Activated CD4-positive, alpha-beta T cell treated with anti-CD3 and anti-CD28 coated beads for 36 hours (primary cell): ENCODE measurements at regions of chr15 and their contacts with region 1.

Region 1: DNA sequence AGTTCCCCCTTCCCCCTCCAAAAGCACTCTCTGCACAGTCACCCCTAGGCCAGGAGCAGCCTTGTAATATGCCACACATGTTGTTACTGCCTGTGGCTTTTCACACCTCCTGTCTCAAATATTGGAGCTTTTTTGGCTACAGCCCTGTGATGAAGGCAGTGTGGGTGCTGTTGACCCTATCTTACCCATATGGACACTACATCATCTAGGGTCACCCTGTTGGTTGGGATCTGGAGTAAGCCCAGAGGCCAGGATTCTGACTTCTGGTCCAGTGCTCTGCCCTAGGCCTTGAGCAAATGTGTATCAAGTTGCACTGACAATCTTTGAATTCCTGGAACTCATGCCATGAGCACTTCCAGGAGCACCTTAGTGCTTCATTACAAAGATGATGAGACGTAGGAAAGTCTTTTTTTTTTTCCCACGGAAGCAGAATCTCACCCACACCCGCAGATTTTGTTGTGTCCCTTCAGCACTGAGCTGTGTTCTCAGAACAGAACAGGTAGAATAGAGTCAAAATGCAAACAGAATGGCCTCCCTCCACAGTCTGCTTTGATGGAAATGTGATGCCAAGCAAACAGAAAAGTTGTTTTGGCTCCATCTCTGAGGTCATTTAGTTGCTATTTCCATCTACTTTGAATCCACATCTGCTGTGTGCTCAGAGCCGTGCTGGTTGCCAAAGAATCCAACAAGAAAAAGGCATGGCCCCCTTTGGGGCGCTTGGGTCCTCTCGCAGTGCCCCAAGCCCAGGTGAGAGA is 49.6 kb downstream of the SMAD3 start:
- DNase-seq: no peak
- ATAC-seq: peak; percentile 68
- H3K4me3 Mint-ChIP-seq: no peak overlapping the region
- H3K27ac Mint-ChIP-seq: peak overlapping the region; percentile 82
- H3K4me1 Mint-ChIP-seq: peaks cover 93% of the 10 kb centered on the region
- H3K27me3 Mint-ChIP-seq: no peaks in the 10 kb centered on the region

Region 2: DNA sequence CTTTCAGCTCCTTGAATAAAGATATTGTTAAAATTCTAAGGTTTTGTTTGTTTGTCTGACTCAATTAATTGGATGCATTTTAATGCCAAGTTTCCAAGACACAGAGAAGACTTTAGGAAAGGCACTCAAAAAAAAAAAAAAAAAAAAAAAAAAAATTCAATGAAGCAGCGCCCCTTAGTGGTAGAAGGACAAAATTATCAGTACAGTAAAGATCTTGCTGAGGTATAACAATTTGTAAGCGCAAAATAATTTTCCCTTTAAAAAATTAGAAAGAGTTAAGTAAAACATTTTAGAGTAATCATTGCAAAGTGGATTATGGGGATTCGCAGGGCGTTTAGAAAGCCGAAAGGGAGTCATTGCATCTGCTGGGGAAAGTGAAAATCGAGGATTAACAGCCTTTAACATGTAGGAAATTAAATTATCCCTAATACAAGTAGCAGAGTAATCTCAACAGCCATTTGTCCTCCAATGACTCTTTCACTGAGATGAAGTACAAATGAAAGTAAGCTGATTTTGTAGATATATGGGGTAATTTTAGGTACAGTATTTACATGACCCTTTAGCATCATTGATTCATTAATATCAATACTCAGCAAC is 827.5 kb before region 1 on chr15:
- CTCF ChIA-PET with region 1: no interaction called
- POLR2A ChIA-PET with region 1: no interaction called
- intact Hi-C with region 1: no loop called
- DNase-seq: no peak
- ATAC-seq: no peak
- H3K4me3 Mint-ChIP-seq: no peak overlapping the region
- H3K27ac Mint-ChIP-seq: no peak overlapping the region
- H3K4me1 Mint-ChIP-seq: peaks cover 25% of the 10 kb centered on the region
- H3K27me3 Mint-ChIP-seq: no peaks in the 10 kb centered on the region

Region 3: DNA sequence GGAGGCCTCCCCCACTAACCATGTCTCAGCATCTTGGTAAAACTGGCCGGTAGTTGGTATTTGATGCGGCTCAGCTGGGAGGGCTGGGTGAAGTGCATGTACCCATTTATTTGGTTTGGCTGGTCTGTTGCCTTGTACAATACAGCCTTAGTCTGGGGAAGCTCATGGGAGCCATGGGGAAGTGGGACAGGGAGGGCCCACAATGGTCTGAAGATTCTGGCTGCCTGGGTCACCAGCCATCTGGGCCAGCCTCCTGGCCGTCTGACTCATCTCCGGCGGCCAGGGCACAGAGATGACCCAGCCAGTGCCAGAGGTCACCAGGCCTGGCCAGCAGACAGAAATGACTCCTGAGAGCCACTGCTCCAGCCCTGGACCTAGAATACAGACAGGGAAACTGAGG is 464.6 kb before region 1 on chr15:
- CTCF ChIA-PET with region 1: no interaction called
- POLR2A ChIA-PET with region 1: no interaction called
- intact Hi-C with region 1: no loop called
- DNase-seq: no peak
- ATAC-seq: no peak
- H3K4me3 Mint-ChIP-seq: no peak overlapping the region
- H3K27ac Mint-ChIP-seq: no peak overlapping the region
- H3K4me1 Mint-ChIP-seq: peaks cover 2% of the 10 kb centered on the region
- H3K27me3 Mint-ChIP-seq: no peaks in the 10 kb centered on the region

Region 4: GRCh38 chr15:67127965-67128364 is 12.9 kb after region 1 on chr15:
- CTCF ChIA-PET with region 1: interaction called, 6 read pairs
- POLR2A ChIA-PET with region 1: interaction called, 7 read pairs
- intact Hi-C with region 1: loop called (anchors 1 kb)
- DNase-seq: peak; percentile 63
- ATAC-seq: peak; percentile 67
- H3K4me3 Mint-ChIP-seq: peak overlapping the region; percentile 20
- H3K27ac Mint-ChIP-seq: peak overlapping the region; percentile 44
- H3K4me1 Mint-ChIP-seq: peaks cover 72% of the 10 kb centered on the region
- H3K27me3 Mint-ChIP-seq: no peaks in the 10 kb centered on the region